ENCODE measurements at regions of chr17 and their contacts with region 1.

Region 1: GRCh38 chr17:37637956-37638355 is 5.3 kb downstream of the DDX52 start:
- DNase-seq: no peak
- ATAC-seq: no peak

Region 2: GRCh38 chr17:36183001-36183971 is 1454.7 kb before region 1 on chr17:
- intact Hi-C with region 1: loop called (anchors 5 kb)
- DNase-seq: peak; percentile 78
- ATAC-seq: peak; percentile 68

Region 3: GRCh38 chr17:36994438-36994837 is 643.5 kb before region 1 on chr17:
- intact Hi-C with region 1: no loop called
- DNase-seq: no peak
- ATAC-seq: no peak

Region 4: DNA sequence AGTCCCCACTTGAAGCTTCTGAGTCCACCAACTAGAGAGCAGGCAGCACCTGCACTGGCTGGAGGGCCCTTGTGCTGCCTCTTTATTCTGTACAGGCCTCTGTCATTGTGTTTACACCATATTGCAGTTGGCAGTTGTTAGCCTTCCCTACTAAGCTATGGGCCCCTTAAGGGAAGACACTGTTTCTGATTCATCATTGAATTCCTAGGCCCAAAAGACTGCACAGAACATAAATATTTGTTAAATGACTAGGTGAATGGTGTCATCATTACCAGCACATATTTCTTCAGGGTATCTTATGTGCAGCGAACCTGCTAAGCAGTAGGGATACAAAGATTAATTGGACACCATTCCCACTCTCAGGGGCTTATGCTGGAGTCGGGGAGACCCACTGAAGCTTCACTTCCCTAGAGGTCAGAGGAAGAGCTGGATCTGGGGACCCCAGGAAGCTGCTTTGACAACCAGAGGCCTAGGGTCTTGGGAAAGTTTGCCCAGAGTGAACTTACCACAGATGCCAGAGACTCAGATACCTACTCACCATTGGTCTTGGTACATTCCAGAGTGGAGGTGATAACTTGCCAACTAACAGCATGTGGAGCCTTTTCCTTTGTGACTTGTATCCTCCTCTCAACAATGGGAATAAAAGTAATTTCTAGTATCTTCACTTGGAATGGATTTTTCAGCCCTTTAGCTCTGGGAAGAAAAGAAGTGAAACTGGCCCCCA is 34.0 kb after region 1 on chr17:
- intact Hi-C with region 1: no loop called
- DNase-seq: no peak
- ATAC-seq: no peak

Measured in sciatic nerve (tissue), 2 donors.